Sigmoid colon (tissue), 7 donors: ENCODE measurements at regions of chr12 and their contacts with region 1.

Region 1: GRCh38 chr12:14995583-14996425 is 23.0 kb downstream of the PDE6H start:
- DNase-seq: no peak
- H3K4me3 ChIP-seq: no peak overlapping the region
- H3K27ac ChIP-seq: peak overlapping the region in 3 of 4 donors; percentile 12 to 62 (median 43)
- H3K4me1 ChIP-seq: peaks cover 0 to 60% (median 46%) of the 10 kb centered on the region in 4 donors
- H3K27me3 ChIP-seq: no peaks in the 10 kb centered on the region
- CTCF ChIP-seq: peak; percentile 21 to 69 (median 38)
- EP300 ChIP-seq: no peak
- POLR2A ChIP-seq: no peak

Region 2: DNA sequence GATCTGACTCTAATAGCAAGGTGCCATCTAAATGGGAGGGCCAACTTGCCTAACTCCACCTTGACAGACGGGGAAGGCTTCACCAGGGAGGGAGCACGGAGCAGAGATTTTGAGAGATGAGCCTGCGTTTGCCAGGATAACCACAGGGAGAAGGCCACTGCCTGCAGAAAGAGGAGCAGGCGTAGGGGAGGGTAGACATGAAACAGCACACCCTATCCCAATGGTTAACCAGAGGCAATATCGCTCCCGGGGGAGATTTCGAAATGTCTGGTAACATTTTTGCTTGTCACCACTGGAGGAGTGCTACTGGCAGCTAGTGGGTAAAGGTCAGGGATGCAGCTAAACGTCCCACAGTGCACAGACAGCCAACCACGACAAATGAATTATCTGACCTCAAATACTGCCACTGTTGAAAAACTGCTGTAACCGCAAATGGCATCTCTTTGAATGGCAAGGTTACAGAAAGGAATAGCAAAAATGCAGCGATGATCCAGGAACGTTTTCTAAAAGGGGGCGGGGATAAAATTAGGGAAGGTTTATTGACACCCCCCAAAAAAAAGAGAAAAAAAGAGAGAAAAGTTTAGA is 756.4 kb before region 1 on chr12:
- intact Hi-C with region 1: loop called (anchors 10 kb)
- DNase-seq: no peak
- H3K4me3 ChIP-seq: peak overlapping the region in 1 of 4 donors; percentile 4
- H3K27ac ChIP-seq: peak overlapping the region in 1 of 4 donors; percentile 14
- H3K4me1 ChIP-seq: peaks cover 0 to 3% (median 0%) of the 10 kb centered on the region in 4 donors
- H3K27me3 ChIP-seq: no peaks in the 10 kb centered on the region
- CTCF ChIP-seq: no peak
- EP300 ChIP-seq: no peak
- POLR2A ChIP-seq: no peak

Region 3: GRCh38 chr12:14769969-14770495 is 225.8 kb before region 1 on chr12:
- intact Hi-C with region 1: loop called (anchors 5 kb)
- DNase-seq: peak; percentile 91
- H3K4me3 ChIP-seq: peak overlapping the region; percentile 63 to 85 (median 68)
- H3K27ac ChIP-seq: peak overlapping the region; percentile 88 to 96 (median 92)
- H3K4me1 ChIP-seq: peaks cover 0 to 34% (median 20%) of the 10 kb centered on the region in 4 donors
- H3K27me3 ChIP-seq: no peaks in the 10 kb centered on the region
- CTCF ChIP-seq: peak; percentile 92 to 97 (median 94)
- EP300 ChIP-seq: no peak
- POLR2A ChIP-seq: peak; percentile 34 to 39

Region 4: DNA sequence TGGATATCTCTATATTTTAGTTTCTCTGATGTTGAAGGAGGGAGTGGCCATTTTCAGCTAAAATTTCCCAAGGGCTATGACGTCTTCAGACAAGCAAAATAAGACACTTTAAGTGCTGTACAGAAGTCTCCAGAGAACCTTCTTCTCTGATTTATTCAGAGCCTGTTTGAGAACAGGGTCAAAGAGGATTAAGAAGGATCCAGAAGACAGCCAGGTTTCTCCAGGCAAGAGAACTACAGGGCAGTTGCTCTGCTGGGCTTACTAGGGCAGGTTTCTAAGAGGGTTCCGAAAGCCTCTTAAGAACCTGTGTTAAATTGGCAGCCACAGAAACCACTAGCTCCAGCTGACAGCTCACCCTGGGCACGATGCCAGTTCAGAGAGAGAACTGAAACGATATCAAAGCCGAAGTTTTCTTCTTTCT is 111.3 kb before region 1 on chr12:
- intact Hi-C with region 1: loop called (anchors 5 kb)
- DNase-seq: peak; percentile 95
- H3K4me3 ChIP-seq: peak overlapping the region; percentile 34 to 52 (median 46)
- H3K27ac ChIP-seq: peak overlapping the region; percentile 82 to 87 (median 82)
- H3K4me1 ChIP-seq: peaks cover 0 to 16% (median 13%) of the 10 kb centered on the region in 4 donors
- H3K27me3 ChIP-seq: no peaks in the 10 kb centered on the region
- CTCF ChIP-seq: no peak
- EP300 ChIP-seq: peak in 1 of 4 donors; percentile 18
- POLR2A ChIP-seq: peak; percentile 12 to 20

Region 5: GRCh38 chr12:15268927-15269552 is 273.2 kb after region 1 on chr12:
- intact Hi-C with region 1: loop called (anchors 5 kb)
- DNase-seq: peak; percentile 72
- H3K4me3 ChIP-seq: no peak overlapping the region
- H3K27ac ChIP-seq: peak overlapping the region in 2 of 4 donors; percentile 16 to 36
- H3K4me1 ChIP-seq: peaks cover 0 to 15% (median 10%) of the 10 kb centered on the region in 4 donors
- H3K27me3 ChIP-seq: no peaks in the 10 kb centered on the region
- CTCF ChIP-seq: peak; percentile 78 to 90 (median 84)
- EP300 ChIP-seq: no peak
- POLR2A ChIP-seq: no peak